ENCODE measurements at regions of chr4 and their contacts with region 1.

Region 1: DNA sequence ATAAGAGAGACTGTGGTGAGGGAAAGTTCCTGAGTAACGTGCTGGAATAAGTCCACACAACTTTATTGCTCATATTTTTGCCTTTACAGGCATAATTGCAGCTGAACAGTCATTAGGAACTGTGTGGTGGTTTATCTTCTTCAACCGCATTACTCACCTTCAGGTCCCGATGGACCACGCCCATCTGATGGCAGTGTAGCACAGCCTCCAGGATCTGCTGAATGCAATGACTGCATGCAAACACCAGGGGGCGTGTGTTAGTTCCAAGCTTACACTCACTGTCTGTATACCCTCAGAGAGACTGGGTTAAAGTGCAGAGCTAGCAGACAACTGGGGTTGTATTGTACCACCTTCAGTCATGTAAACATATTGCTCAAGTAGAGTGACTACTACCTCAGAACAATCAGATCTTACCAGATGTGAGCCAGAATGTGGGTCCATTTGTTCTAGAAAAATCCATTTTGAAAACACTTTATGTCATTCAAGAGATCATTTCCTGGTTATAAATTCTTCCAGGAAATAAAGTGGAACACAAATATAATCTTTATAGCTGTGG is 214.0 kb downstream of the CAMK2D start:
- DNase-seq: peak; percentile 97
- H3K4me3 Mint-ChIP-seq: no peak overlapping the region
- H3K27ac Mint-ChIP-seq: peak overlapping the region; percentile 8
- H3K4me1 Mint-ChIP-seq: peaks cover 17% of the 10 kb centered on the region
- H3K27me3 Mint-ChIP-seq: no peaks in the 10 kb centered on the region

Region 2: GRCh38 chr4:113131136-113131535 is 416.4 kb before region 1 on chr4:
- CTCF ChIA-PET with region 1: no interaction called
- intact Hi-C with region 1: no loop called
- DNase-seq: no peak
- H3K4me3 Mint-ChIP-seq: no peak overlapping the region
- H3K27ac Mint-ChIP-seq: no peak overlapping the region
- H3K4me1 Mint-ChIP-seq: no peaks in the 10 kb centered on the region
- H3K27me3 Mint-ChIP-seq: peaks cover 4% of the 10 kb centered on the region

Region 3: GRCh38 chr4:113384600-113384999 is 163.0 kb before region 1 on chr4:
- CTCF ChIA-PET with region 1: no interaction called
- intact Hi-C with region 1: loop called (anchors 2 kb)
- DNase-seq: peak; percentile 18
- H3K4me3 Mint-ChIP-seq: no peak overlapping the region
- H3K27ac Mint-ChIP-seq: peak overlapping the region; percentile 64
- H3K4me1 Mint-ChIP-seq: peaks cover 32% of the 10 kb centered on the region
- H3K27me3 Mint-ChIP-seq: peaks cover 10% of the 10 kb centered on the region

Region 4: DNA sequence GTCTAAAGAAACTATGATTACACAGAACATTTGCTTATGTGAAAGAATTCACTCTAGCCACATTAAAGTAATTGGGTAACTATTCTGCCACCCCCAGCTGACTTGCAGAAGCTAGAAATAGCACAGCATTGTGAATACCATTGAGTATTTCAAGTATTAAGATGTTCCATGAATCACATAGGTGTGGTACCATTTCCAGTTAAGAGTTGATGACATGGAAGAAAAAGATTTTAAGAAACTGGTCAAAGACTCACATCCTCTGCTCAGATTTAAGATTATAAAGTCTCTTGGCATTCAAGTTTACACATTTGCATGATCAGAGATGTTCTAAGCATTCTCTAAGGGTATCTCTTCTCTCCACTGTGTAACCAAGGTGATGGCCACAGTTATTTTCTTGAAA is 73.5 kb before region 1 on chr4:
- CTCF ChIA-PET with region 1: no interaction called
- intact Hi-C with region 1: loop called (anchors 1 kb)
- DNase-seq: peak; percentile 55
- H3K4me3 Mint-ChIP-seq: no peak overlapping the region
- H3K27ac Mint-ChIP-seq: peak overlapping the region; percentile 84
- H3K4me1 Mint-ChIP-seq: peaks cover 56% of the 10 kb centered on the region
- H3K27me3 Mint-ChIP-seq: no peaks in the 10 kb centered on the region

Region 5: DNA sequence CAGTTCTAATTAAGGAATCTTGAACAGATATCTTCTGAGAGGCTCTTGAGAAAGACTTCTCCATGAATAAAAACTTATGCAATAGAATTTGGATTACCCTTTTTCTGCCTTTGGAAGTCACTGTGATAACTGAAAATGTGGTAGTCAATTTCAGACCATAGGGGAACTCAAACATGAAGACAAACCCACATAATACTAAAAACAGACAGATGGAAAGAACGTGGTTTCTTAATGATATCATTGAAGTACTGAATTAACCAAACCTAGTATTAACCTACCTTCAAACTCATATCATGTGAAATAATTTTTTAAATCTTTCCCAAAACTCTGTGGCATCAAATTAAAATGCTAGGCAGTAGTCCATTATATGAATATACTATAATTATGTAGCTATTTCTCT is 60.4 kb after region 1 on chr4:
- CTCF ChIA-PET with region 1: no interaction called
- intact Hi-C with region 1: loop called (anchors 2 kb)
- DNase-seq: no peak
- H3K4me3 Mint-ChIP-seq: no peak overlapping the region
- H3K27ac Mint-ChIP-seq: no peak overlapping the region
- H3K4me1 Mint-ChIP-seq: peaks cover 29% of the 10 kb centered on the region
- H3K27me3 Mint-ChIP-seq: no peaks in the 10 kb centered on the region

Region 6: GRCh38 chr4:113732967-113733527 is 185.5 kb after region 1 on chr4:
- CTCF ChIA-PET with region 1: interaction called, 3 read pairs
- intact Hi-C with region 1: loop called (anchors 1 kb)
- DNase-seq: no peak
- H3K4me3 Mint-ChIP-seq: no peak overlapping the region
- H3K27ac Mint-ChIP-seq: peak overlapping the region; percentile 59
- H3K4me1 Mint-ChIP-seq: peaks cover 73% of the 10 kb centered on the region
- H3K27me3 Mint-ChIP-seq: no peaks in the 10 kb centered on the region

Region 7: GRCh38 chr4:113901994-113902787 is 354.6 kb after region 1 on chr4:
- CTCF ChIA-PET with region 1: no interaction called
- intact Hi-C with region 1: loop called (anchors 1 kb)
- DNase-seq: peak; percentile 82
- H3K4me3 Mint-ChIP-seq: peak overlapping the region; percentile 65
- H3K27ac Mint-ChIP-seq: peak overlapping the region; percentile 82
- H3K4me1 Mint-ChIP-seq: peaks cover 58% of the 10 kb centered on the region
- H3K27me3 Mint-ChIP-seq: no peaks in the 10 kb centered on the region